Esophagus squamous epithelium (tissue), 5 donors: ENCODE measurements at regions of chr3 and their contacts with region 1.

Region 1: GRCh38 chr3:172673210-172673679 is 37.6 kb downstream of the NCEH1 start:
- DNase-seq: no peak
- H3K4me3 ChIP-seq: no peak overlapping the region
- H3K27ac ChIP-seq: no peak overlapping the region
- H3K4me1 ChIP-seq: peaks cover 14 to 46% (median 17%) of the 10 kb centered on the region in 3 donors
- H3K27me3 ChIP-seq: no peaks in the 10 kb centered on the region
- CTCF ChIP-seq: peak; percentile 67 to 91 (median 72)
- POLR2A ChIP-seq: no peak

Region 2: GRCh38 chr3:172094621-172095557 is 578.4 kb before region 1 on chr3:
- intact Hi-C with region 1: no loop called
- DNase-seq: no peak
- H3K4me3 ChIP-seq: no peak overlapping the region
- H3K27ac ChIP-seq: peak overlapping the region in 2 of 4 donors; percentile 2 to 47
- H3K4me1 ChIP-seq: peaks cover 0 to 37% (median 13%) of the 10 kb centered on the region in 3 donors
- H3K27me3 ChIP-seq: no peaks in the 10 kb centered on the region
- CTCF ChIP-seq: peak in 1 of 6 experiments; percentile 8
- POLR2A ChIP-seq: no peak

Region 3: DNA sequence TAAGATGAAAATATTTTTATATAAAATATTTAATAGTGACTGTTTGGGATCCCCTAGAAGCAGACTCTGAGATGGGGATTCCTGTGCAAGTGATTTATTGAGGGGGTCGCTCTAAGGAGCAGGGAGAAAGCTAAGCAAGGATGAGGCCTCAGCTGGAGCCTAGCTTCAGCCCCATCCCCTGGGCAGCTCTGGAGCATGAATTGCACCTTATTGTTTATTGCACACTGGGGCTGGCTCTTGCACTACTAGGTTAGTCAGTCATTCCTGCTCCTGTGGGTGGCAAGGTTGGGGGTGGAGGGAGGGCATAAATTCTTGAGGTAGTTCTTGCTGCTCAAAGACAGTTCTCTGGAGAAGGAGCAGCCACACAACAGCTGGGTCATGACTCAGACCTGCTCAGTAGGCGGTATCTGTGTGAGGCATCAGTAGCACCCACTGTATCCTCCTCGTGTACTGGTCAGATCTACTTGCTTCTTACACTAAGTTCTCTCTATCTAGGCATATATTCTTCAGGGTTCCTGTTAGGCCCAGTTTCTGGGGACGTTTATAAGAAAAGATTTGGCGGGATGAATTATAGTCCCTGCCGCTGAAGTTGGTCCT is 122.8 kb before region 1 on chr3:
- intact Hi-C with region 1: no loop called
- DNase-seq: no peak
- H3K4me3 ChIP-seq: no peak overlapping the region
- H3K27ac ChIP-seq: no peak overlapping the region
- H3K4me1 ChIP-seq: peaks cover 11 to 37% (median 13%) of the 10 kb centered on the region in 3 donors
- H3K27me3 ChIP-seq: no peaks in the 10 kb centered on the region
- CTCF ChIP-seq: no peak
- POLR2A ChIP-seq: no peak

Region 4: DNA sequence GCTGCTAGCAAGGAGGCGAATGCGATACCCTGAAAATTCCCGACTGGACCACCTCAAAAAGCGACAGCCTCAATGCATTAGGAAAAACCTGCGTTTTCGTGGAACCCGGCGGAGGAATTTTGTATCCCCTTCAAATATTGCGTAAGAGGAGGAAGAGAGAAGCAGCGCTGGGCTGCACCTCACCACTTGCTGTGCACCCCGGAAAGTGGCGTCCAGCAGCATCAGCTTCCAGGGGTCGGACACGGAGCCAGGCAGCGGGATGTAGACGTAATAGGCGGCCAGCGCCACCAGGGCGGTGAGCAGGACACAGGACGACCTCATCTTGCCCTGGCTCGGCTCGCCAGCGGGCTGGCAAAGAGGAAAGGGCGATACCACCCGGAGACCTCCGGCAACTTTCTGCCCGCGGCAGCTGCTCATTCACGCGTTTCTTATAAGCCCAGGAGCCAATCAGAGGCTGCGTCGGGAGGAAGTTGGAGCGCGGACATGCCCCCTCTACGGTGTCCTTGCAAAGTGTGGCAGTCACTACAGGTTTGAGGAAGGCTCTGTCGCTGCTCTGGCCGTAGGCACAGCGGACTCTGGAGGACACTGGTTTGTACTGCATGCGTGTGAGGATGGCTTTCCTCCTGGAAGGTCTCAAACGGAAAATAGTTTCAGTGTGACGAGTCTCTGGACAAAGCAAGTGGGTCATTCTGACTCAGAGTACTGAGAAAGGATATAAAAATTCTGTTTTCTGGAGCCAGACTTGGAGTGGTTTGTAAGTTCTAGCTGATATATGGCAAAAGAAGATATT is 37.6 kb after region 1 on chr3 and contains the start of gene NCEH1:
- intact Hi-C with region 1: loop called (anchors 5 kb)
- DNase-seq: peak; percentile 28
- H3K4me3 ChIP-seq: peak within 1 kb of the TSS; percentile 69 to 86 (median 84)
- H3K27ac ChIP-seq: peak within 1 kb of the TSS; percentile 83 to 94 (median 89)
- H3K4me1 ChIP-seq: peaks cover 8 to 49% (median 18%) of the 10 kb centered on the region in 3 donors
- H3K27me3 ChIP-seq: no peaks in the 10 kb centered on the region
- CTCF ChIP-seq: peak; percentile 61 to 88 (median 79)
- POLR2A ChIP-seq: peak in 3 of 4 donors; percentile 63 to 73 (median 70)
- total RNA-seq, gene NCEH1: 2.2 to 9.1 (median 5.0) TPM

Region 5: DNA sequence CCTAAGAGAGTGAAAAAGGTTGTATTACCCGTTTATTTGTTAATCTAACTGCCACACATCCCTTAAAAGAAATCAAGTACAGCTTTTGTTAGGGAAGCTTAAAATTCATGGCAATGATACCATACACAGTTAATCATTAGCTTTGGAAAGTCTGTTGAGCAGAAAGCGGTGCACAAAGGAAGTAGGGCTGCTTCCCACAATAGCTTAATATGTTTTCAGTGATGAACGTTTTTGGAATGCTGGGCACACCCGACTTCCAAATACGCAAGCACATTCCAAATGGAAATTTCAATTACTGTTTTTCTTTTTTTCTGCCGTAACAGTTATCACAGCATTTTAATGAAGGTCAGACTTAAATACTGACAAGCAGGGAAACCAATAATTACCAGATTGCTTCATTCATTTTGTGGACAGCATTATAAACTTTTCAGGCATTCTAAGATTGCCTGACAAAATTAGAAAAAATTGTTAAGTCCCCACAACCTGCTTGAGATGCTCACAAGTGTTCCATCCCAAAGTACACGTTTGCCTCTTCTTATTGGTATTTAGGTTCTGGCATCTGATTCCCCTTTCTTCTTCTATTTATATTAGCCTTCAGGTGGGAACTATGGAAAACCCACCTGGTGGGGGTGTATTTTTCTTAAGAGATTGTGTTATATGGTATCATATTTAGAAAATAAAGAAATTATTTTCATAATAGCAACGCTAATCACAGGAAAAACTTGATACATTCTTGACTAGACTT is 76.1 kb after region 1 on chr3:
- intact Hi-C with region 1: loop called (anchors 5 kb)
- DNase-seq: no peak
- H3K4me3 ChIP-seq: peak overlapping the region; percentile 26 to 96 (median 78)
- H3K27ac ChIP-seq: peak overlapping the region; percentile 72 to 91 (median 85)
- H3K4me1 ChIP-seq: peaks cover 7 to 30% (median 14%) of the 10 kb centered on the region in 3 donors
- H3K27me3 ChIP-seq: no peaks in the 10 kb centered on the region
- CTCF ChIP-seq: no peak
- POLR2A ChIP-seq: no peak